Sigmoid colon (tissue), 7 donors: ENCODE measurements at regions of chr12 and their contacts with region 1.

Region 1: DNA sequence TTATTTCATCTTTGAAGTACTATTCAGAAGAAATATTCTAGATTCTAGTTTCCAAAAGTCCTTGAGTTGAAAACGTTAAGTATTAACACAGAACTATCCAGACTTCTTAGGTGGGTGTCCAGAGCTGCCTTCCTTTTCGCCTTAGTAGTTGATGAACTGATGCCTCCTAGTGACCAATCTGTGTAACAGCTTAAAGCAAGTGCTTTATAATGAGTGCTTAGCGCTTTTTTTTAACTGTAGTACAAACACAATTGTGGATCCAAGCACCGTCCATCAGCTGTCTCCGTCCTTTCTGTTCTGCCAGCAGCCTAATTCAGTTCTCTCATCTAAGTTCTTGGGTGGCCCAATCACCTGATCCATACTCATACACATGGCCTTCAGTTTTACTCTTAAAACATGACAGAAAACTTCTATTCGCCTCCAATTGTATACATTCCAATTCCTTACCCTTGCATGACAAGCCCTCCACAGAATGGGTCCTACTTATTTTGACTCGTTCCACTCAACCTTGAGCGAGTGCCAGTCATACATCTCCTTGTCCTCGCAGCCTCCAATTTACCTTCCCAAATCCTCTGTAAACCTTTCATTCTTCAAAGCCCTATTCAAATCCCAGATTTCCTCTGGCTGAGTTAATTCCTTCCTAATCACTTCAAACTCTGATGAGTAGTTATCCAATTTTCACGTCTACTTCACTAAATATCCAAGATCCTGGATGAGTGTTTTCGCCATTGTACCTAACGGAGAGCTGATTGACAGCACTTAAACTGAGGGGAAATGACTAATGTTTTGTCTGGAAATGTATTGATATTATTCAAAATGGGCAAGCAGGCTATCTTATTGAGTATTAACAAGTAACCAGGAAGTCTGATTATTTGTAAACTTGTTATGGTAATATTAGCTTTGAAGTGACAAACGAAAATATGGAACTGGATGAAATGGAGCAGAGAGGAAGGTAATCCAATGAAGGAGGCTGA is 5.8 kb upstream of the PHLDA1 start:
- DNase-seq: no peak
- H3K4me3 ChIP-seq: no peak overlapping the region
- H3K27ac ChIP-seq: no peak overlapping the region
- H3K4me1 ChIP-seq: peaks cover 0 to 10% (median 7%) of the 10 kb centered on the region in 4 donors
- H3K27me3 ChIP-seq: no peaks in the 10 kb centered on the region
- CTCF ChIP-seq: peak in 3 of 4 experiments; percentile 72 to 77 (median 73)
- EP300 ChIP-seq: no peak
- POLR2A ChIP-seq: no peak

Region 2: GRCh38 chr12:75526655-75527511 is 510.5 kb before region 1 on chr12:
- intact Hi-C with region 1: loop called (anchors 2 kb)
- DNase-seq: peak; percentile 47
- H3K4me3 ChIP-seq: no peak overlapping the region
- H3K27ac ChIP-seq: no peak overlapping the region
- H3K4me1 ChIP-seq: no peaks in the 10 kb centered on the region
- H3K27me3 ChIP-seq: no peaks in the 10 kb centered on the region
- CTCF ChIP-seq: peak; percentile 31 to 59 (median 47)
- EP300 ChIP-seq: no peak
- POLR2A ChIP-seq: no peak

Region 3: DNA sequence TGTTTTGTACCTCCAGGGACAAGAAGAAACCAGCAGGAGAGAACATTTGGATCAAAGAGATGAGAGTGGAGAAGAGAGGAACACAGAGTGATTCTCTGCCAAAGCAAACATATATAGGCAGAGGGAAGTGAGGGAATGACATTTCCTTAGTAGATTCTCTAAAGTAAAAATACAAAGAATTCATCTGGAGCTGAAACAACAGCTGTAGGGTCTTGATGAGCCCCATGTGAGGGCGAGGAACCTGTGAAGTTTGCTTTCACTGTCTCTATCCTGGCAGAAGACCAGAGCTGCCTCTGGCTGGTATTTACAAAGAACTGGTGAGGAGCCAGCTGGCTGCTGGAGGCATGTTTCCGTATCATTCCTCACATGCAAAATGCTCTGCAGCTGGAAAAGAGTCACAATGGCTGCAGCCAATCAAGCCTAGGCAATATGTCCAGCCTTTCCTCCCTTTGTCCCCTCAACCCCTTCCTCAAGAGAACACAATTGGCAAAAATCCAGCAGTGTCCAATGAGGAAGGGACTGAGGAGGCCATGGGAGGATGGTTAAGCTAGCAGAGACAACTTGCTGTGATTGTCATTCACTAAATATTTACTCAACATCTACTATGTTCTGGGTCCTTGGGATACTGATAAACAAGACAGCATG is 128.3 kb before region 1 on chr12:
- intact Hi-C with region 1: loop called (anchors 5 kb)
- DNase-seq: peak; percentile 85
- H3K4me3 ChIP-seq: no peak overlapping the region
- H3K27ac ChIP-seq: peak overlapping the region; percentile 24 to 59 (median 31)
- H3K4me1 ChIP-seq: peaks cover 0 to 17% (median 13%) of the 10 kb centered on the region in 4 donors
- H3K27me3 ChIP-seq: no peaks in the 10 kb centered on the region
- CTCF ChIP-seq: no peak
- EP300 ChIP-seq: no peak
- POLR2A ChIP-seq: no peak